H1 (cell line): ENCODE measurements at regions of chr14 and their contacts with region 1.

Region 1: GRCh38 chr14:75514673-75515628 is 7.3 kb upstream of the BATF start:
- DNase-seq: peak in 1 of 2 experiments; percentile 53
- H3K4me3 ChIP-seq: no peak overlapping the region
- H3K27ac ChIP-seq: no peak overlapping the region
- H3K4me1 ChIP-seq: peaks cover 0 to 4% (median 1%) of the 10 kb centered on the region in 4 experiments; a peak in 1 of 7 replicates
- H3K27me3 ChIP-seq: no peaks in the 10 kb centered on the region
- CTCF ChIP-seq: peak; percentile 15 to 47 (median 37)
- EP300 ChIP-seq: no peak
- POLR2A ChIP-seq: no peak
- RAD21 ChIP-seq: peak; percentile 22 to 45

Region 2: GRCh38 chr14:75482366-75482765 is 32.6 kb before region 1 on chr14:
- CTCF ChIA-PET with region 1: no interaction called
- POLR2A ChIA-PET with region 1: no interaction called
- DNase-seq: no peak
- H3K4me3 ChIP-seq: no peak overlapping the region
- H3K27ac ChIP-seq: no peak overlapping the region
- H3K4me1 ChIP-seq: peaks cover 3 to 8% (median 3%) of the 10 kb centered on the region in 4 experiments; a peak in 6 of 7 replicates
- H3K27me3 ChIP-seq: 0 out of 7 replicates have a peak, but pooled peaks cover 0 to 2% (median 0%) of the 10 kb centered on the region in 4 experiments
- CTCF ChIP-seq: no peak
- EP300 ChIP-seq: no peak
- POLR2A ChIP-seq: no peak
- RAD21 ChIP-seq: no peak

Region 3: DNA sequence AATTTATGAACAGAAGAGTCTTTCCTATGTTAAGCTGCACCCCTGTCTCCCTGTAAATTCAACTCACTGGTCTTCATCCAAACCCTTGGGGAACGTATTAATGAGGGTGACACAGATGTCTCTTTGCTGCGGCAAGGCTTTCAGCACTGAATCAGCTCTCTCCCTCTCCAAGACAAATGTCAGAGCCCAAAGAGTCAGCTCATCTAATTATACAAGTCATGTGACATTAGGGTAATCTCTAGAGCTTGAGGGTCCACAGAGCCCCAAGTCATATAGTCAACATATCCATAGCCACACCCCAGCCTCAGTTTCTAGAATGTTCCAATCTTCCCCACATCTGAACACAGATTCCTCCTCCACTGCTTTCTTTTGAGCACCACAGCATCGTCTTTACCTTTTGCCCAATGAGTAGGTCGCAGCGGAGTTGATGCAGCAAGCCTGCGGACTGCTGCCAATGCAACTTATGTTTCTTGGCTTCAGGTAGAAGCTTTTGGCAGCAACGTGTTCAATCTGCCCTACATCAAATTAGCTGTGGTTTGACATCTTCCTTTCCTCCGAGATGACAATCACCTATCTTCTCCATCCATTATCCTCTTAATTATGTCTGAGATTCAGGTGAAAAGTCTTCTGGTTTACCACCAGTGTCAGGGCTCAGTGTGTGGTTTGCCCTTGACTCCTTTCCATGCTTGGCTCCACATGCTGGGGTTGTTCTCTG is 12.7 kb after region 1 on chr14:
- CTCF ChIA-PET with region 1: interaction called, 25 read pairs
- POLR2A ChIA-PET with region 1: no interaction called
- DNase-seq: peak in 1 of 2 experiments; percentile 22
- H3K4me3 ChIP-seq: no peak overlapping the region
- H3K27ac ChIP-seq: no peak overlapping the region
- H3K4me1 ChIP-seq: no peaks in the 10 kb centered on the region
- H3K27me3 ChIP-seq: no peaks in the 10 kb centered on the region
- CTCF ChIP-seq: no peak
- EP300 ChIP-seq: no peak
- POLR2A ChIP-seq: no peak
- RAD21 ChIP-seq: no peak

Region 4: GRCh38 chr14:75549169-75549568 is 34.2 kb after region 1 on chr14:
- CTCF ChIA-PET with region 1: interaction called, 22 read pairs
- POLR2A ChIA-PET with region 1: no interaction called
- DNase-seq: no peak
- H3K4me3 ChIP-seq: no peak overlapping the region
- H3K27ac ChIP-seq: no peak overlapping the region
- H3K4me1 ChIP-seq: no peaks in the 10 kb centered on the region; a peak in 1 of 7 replicates
- H3K27me3 ChIP-seq: peaks cover 0 to 2% (median 0%) of the 10 kb centered on the region in 4 experiments; a peak in 1 of 7 replicates
- CTCF ChIP-seq: no peak
- EP300 ChIP-seq: no peak
- POLR2A ChIP-seq: no peak
- RAD21 ChIP-seq: no peak

Region 5: DNA sequence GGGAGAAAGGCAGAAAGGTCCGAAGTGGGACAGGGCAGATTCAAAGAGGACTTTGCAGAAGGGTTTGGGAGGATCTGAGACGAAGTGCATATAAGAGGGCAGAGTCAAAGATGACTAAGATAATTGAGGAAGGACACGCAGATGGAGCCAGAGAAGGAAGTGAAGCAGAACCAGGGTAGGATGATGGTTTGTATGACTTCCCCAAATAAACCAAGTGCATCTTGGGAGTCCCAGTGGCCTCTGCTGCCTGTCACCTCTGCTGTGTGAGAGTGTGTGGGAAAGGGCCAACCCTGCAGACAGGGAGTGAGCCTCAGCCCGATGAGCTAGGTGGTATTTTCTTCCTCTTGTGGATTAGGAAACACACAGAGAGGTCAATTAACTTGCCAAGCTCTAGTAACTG is 100.2 kb after region 1 on chr14:
- CTCF ChIA-PET with region 1: no interaction called
- POLR2A ChIA-PET with region 1: no interaction called
- DNase-seq: no peak
- H3K4me3 ChIP-seq: no peak overlapping the region
- H3K27ac ChIP-seq: no peak overlapping the region
- H3K4me1 ChIP-seq: no peaks in the 10 kb centered on the region
- H3K27me3 ChIP-seq: no peaks in the 10 kb centered on the region
- CTCF ChIP-seq: no peak
- EP300 ChIP-seq: no peak
- POLR2A ChIP-seq: no peak
- RAD21 ChIP-seq: no peak